Activated naive CD4-positive, alpha-beta T cell treated with anti-CD3 and anti-CD28 coated beads, Interleukin-2, amount 10 ng/mL, durations not matched to agents 7 days and 5 days (primary cell): ENCODE measurements at regions of chr5 and their contacts with region 1.

Region 1: DNA sequence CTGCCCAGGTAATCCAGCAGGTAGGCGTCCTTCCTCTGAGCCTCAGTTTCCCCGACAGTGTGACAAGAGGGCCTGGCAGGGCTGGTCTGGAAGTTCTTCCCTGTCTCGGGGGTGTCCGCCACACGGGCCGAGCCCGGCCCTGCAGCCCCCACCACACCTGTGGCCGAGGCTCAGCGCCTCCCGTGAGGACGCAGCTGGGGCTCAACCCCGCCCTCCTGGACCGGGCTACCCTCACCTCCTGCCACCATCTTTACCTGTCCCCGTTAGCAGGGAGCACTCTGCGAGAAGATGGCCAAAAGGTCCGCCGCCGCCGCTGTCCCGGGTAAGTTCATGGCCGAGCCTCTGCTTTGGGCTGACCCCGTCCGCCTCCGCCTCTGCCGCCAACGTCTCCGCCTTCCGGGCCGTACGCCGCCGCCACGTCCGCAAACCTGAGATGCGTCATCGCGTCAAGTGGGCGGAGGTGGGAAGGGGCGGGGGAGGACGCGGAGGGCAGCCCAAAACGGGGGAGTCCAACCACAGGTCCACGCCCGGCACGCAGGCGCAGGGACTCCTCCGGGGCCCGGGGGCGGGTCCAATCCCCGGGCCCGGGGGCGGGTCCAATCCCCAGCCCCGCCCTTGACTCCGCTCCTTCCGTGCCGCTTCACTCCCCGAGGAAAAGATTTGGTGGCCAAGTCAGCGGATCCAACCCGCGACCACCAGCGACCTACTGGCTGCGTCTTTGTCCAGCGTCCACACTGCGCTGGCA is at the start of gene LYSMD3:
- DNase-seq: peak; percentile 98
- H3K4me3 Mint-ChIP-seq: peak within 1 kb of the TSS; percentile 98
- H3K27ac Mint-ChIP-seq: peak within 1 kb of the TSS; percentile 96
- H3K4me1 Mint-ChIP-seq: peaks cover 27% of the 10 kb centered on the region
- H3K27me3 Mint-ChIP-seq: peaks cover 11% of the 10 kb centered on the region

Region 2: GRCh38 chr5:90409318-90410177 is 119.8 kb before region 1 on chr5 and contains the start of gene CETN3:
- CTCF ChIA-PET with region 1: interaction called, 12 read pairs
- DNase-seq: peak; percentile 94
- H3K4me3 Mint-ChIP-seq: no peak within 1 kb of the TSS
- H3K27ac Mint-ChIP-seq: no peak within 1 kb of the TSS
- H3K4me1 Mint-ChIP-seq: peaks cover 16% of the 10 kb centered on the region
- H3K27me3 Mint-ChIP-seq: peaks cover 5% of the 10 kb centered on the region

Region 3: DNA sequence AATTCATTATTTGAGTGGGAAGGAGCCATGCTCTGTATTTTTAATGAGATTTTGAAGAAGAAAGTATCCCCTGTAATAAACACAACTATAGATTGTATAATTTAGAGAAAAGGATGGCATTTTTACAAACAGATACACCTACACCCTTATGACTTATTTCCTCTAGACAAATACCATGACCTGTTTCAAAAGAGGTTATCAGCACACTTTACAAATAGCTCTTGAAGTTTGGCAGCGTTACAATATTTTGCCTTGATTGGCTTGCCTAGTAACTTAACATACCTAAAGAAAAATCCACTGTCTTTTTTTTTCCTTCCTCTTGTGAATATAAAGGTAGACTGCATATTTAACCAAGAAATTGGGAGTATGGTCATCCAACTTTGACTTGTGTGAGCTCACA is 91.3 kb before region 1 on chr5:
- CTCF ChIA-PET with region 1: interaction called, 53 read pairs
- DNase-seq: no peak
- H3K4me3 Mint-ChIP-seq: no peak overlapping the region
- H3K27ac Mint-ChIP-seq: no peak overlapping the region
- H3K4me1 Mint-ChIP-seq: peaks cover 10% of the 10 kb centered on the region
- H3K27me3 Mint-ChIP-seq: peaks cover 4% of the 10 kb centered on the region

Region 4: GRCh38 chr5:90518661-90519060 is 10.7 kb before region 1 on chr5:
- CTCF ChIA-PET with region 1: no interaction called
- DNase-seq: no peak
- H3K4me3 Mint-ChIP-seq: no peak overlapping the region
- H3K27ac Mint-ChIP-seq: no peak overlapping the region
- H3K4me1 Mint-ChIP-seq: peaks cover 8% of the 10 kb centered on the region
- H3K27me3 Mint-ChIP-seq: no peaks in the 10 kb centered on the region

Region 5: GRCh38 chr5:90549729-90550275 is 20.4 kb after region 1 on chr5:
- CTCF ChIA-PET with region 1: no interaction called
- DNase-seq: no peak
- H3K4me3 Mint-ChIP-seq: no peak overlapping the region
- H3K27ac Mint-ChIP-seq: no peak overlapping the region
- H3K4me1 Mint-ChIP-seq: no peaks in the 10 kb centered on the region
- H3K27me3 Mint-ChIP-seq: peaks cover 17% of the 10 kb centered on the region